ENCODE measurements at regions of chr13 and their contacts with region 1.

Region 1: DNA sequence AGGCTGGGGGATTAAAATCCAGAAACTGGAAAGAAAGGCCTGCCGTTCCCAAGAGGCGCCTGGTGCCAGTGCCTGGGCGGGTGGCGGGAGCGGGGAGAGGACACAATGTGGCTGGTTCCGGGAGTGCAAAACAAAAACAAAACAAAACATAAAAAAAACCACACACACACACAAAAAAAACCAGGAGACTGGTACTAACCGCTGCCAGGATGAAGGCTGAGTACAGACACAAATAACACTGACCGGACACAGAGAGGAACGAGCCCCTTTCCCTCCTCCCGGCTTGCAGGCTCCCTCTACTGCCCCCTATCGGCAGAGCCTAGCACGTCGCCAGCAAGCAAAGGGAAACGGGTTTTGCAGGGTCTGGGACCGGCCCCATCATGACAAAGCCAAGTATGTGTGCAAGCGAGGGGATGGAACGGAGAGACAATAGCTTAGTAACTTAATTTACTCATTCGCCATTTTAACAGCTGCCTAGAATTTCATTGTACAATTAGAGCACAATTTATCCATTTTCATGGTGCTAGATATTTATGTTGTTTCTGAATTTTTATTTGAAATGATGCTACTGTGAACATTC is 17.9 kb upstream of the ZDHHC20 start:
- DNase-seq: peak; percentile 89
- H3K4me3 ChIP-seq: peak overlapping the region; percentile 14
- H3K27ac ChIP-seq: no peak overlapping the region
- H3K4me1 ChIP-seq: no peaks in the 10 kb centered on the region
- H3K27me3 ChIP-seq: no peaks in the 10 kb centered on the region
- CTCF ChIP-seq: peak; percentile 97

Region 2: GRCh38 chr13:21111546-21111945 is 365.4 kb before region 1 on chr13:
- intact Hi-C with region 1: loop called (anchors 5 kb)
- DNase-seq: no peak
- H3K4me3 ChIP-seq: no peak overlapping the region
- H3K27ac ChIP-seq: no peak overlapping the region
- H3K4me1 ChIP-seq: no peaks in the 10 kb centered on the region
- H3K27me3 ChIP-seq: no peaks in the 10 kb centered on the region
- CTCF ChIP-seq: no peak

Region 3: GRCh38 chr13:21297914-21298831 is 178.8 kb before region 1 on chr13:
- intact Hi-C with region 1: loop called (anchors 2 kb)
- DNase-seq: peak; percentile 88
- H3K4me3 ChIP-seq: peak overlapping the region; percentile 91
- H3K27ac ChIP-seq: peak overlapping the region; percentile 51
- H3K4me1 ChIP-seq: no peaks in the 10 kb centered on the region
- H3K27me3 ChIP-seq: no peaks in the 10 kb centered on the region
- CTCF ChIP-seq: peak; percentile 90

Measured in colonic mucosa (tissue), 4 donors.